A549 (cell line): ENCODE measurements at regions of chr20 and their contacts with region 1.

Region 1: GRCh38 chr20:10225439-10226060 is 6.9 kb downstream of the SNAP25 start:
- DNase-seq: peak; percentile 33 to 66
- ATAC-seq: peak; percentile 49 to 77; a peak in 4 of 6 replicates
- H3K4me3 ChIP-seq: no peak overlapping the region
- H3K27ac ChIP-seq: peak overlapping the region; percentile 42 to 72
- H3K4me1 ChIP-seq: peaks cover 66% of the 10 kb centered on the region
- CTCF ChIP-seq: peak; percentile 43
- EP300 ChIP-seq: no peak
- POLR2A ChIP-seq: no peak
- RAD21 ChIP-seq: peak; percentile 49 to 58; a peak in 4 of 5 replicates

Region 2: GRCh38 chr20:10239954-10240353 is 14.4 kb after region 1 on chr20:
- CTCF ChIA-PET with region 1: interaction called, 12 read pairs
- POLR2A ChIA-PET with region 1: no interaction called
- DNase-seq: peak; percentile 38 to 84
- ATAC-seq: peak; percentile 47
- H3K4me3 ChIP-seq: no peak overlapping the region
- H3K27ac ChIP-seq: peak overlapping the region; percentile 72 to 81
- H3K4me1 ChIP-seq: peaks cover 35% of the 10 kb centered on the region
- CTCF ChIP-seq: no peak
- EP300 ChIP-seq: no peak
- POLR2A ChIP-seq: no peak
- RAD21 ChIP-seq: no peak; a peak in 1 of 5 replicates

Region 3: DNA sequence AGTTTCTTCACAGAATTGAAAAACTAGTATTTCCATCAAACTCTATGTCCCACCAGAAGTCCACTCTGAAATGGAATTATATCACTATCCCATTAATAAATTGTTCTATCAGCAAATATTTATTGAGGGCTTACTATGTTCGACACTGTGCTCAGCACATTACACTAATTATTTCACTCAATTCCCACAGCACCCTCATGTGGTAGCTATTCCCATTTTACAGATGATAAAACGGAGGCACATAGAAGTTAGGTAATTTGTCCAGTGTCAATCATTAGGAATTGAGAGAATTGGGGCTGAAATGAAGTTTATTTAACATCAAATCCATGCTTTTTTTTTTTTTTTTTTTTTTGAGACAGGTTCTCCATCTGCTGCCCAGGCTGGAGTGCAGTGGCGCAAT is 155.9 kb after region 1 on chr20:
- CTCF ChIA-PET with region 1: no interaction called
- POLR2A ChIA-PET with region 1: no interaction called
- DNase-seq: peak in 1 of 2 experiments; percentile 56
- ATAC-seq: no peak; a peak in 1 of 6 replicates
- H3K4me3 ChIP-seq: no peak overlapping the region
- H3K27ac ChIP-seq: peak overlapping the region; percentile 36 to 77; a peak in 5 of 6 replicates
- H3K4me1 ChIP-seq: no peaks in the 10 kb centered on the region
- CTCF ChIP-seq: peak; percentile 54
- EP300 ChIP-seq: no peak
- POLR2A ChIP-seq: no peak
- RAD21 ChIP-seq: peak; percentile 57 to 65